Prostate gland (tissue), 2 donors: ENCODE measurements at regions of chr11 and their contacts with region 1.

Region 1: DNA sequence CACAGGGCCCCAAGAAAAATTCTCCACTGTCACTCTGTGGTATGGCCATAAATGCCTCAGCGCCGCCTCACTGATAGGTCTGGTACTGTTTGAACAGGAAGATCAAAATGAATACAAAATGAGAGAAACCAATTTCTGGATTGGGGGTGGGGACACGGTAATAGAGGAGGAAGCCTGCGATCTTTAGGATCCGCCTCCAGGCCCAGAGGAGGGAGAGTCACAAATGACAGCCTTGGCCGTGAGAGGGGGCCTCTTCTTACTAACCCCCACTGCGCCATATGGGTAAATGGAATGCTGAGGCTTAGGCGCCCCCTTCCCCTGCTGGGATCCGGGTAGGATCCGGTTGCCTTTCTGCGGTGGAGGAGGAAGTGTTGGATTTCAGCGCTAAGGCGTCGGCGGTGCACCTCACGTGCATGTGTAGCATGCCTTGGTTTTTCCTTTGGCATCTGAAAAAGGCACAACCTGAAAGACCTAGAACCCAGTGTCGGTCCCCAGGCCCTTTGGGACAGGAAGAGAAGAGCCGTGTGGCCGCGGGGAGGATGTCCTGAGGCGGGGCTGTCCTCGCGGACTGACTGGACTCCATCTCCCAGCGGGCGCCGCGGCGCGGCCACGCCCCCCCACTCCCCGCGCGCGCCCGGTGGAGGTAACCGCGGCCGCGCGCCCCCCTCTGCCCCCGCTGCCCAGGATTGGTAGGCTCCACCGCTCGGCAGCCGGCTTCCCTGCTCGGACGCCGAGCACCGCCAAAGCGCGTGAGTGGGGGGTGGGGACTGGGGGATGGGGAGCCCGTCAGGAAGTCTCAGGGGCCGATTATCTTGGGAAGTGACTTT is 718 bp upstream of the MADD start:
- DNase-seq: peak; percentile 90
- H3K4me3 ChIP-seq: peak overlapping the region; percentile 69 to 90
- H3K27ac ChIP-seq: peak overlapping the region; percentile 97
- H3K4me1 ChIP-seq: peaks cover 12% of the 10 kb centered on the region
- H3K27me3 ChIP-seq: no peaks in the 10 kb centered on the region
- CTCF ChIP-seq: peak in 2 of 4 experiments; percentile 50 to 56
- POLR2A ChIP-seq: no peak

Region 2: DNA sequence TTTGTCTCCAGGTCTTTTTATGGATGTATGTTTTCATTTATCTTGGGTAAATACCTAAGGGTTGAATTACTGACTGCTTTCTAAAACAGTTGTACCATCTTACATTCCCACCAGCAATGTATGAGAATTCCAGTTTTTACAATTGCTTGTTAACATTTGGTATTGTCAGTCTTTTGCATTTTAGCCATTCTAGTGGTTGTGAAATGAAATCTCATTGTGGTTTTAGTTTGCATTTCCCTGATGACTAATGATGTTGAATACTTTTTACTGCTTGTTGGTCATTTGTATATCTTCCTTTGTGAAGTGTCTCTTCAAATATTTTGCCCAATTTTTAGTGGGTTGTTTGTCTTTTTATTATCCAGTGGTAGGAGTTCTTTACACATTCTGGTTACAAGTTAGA is 185.3 kb before region 1 on chr11:
- intact Hi-C with region 1: no loop called
- DNase-seq: no peak
- H3K4me3 ChIP-seq: no peak overlapping the region
- H3K27ac ChIP-seq: no peak overlapping the region
- H3K4me1 ChIP-seq: no peaks in the 10 kb centered on the region
- H3K27me3 ChIP-seq: no peaks in the 10 kb centered on the region
- CTCF ChIP-seq: no peak
- POLR2A ChIP-seq: no peak

Region 3: GRCh38 chr11:47176328-47177228 is 92.6 kb before region 1 on chr11 and contains the start of gene ARFGAP2:
- intact Hi-C with region 1: loop called (anchors 2 kb)
- DNase-seq: peak; percentile 98
- H3K4me3 ChIP-seq: peak within 1 kb of the TSS; percentile 72 to 84
- H3K27ac ChIP-seq: peak within 1 kb of the TSS; percentile 97 to 100
- H3K4me1 ChIP-seq: peaks cover 16% of the 10 kb centered on the region
- H3K27me3 ChIP-seq: no peaks in the 10 kb centered on the region
- CTCF ChIP-seq: peak in 1 of 4 experiments; percentile 3
- POLR2A ChIP-seq: peak; percentile 32
- total RNA-seq, gene ARFGAP2: 111 to 146 TPM

Region 4: GRCh38 chr11:47220401-47220824 is 48.8 kb before region 1 on chr11:
- intact Hi-C with region 1: loop called (anchors 5 kb)
- DNase-seq: no peak
- H3K4me3 ChIP-seq: no peak overlapping the region
- H3K27ac ChIP-seq: no peak overlapping the region
- H3K4me1 ChIP-seq: peaks cover 15% of the 10 kb centered on the region
- H3K27me3 ChIP-seq: no peaks in the 10 kb centered on the region
- CTCF ChIP-seq: no peak
- POLR2A ChIP-seq: no peak

Region 5: GRCh38 chr11:47233989-47234668 is 35.1 kb before region 1 on chr11:
- intact Hi-C with region 1: no loop called
- DNase-seq: no peak
- H3K4me3 ChIP-seq: peak overlapping the region; percentile 13 to 29
- H3K27ac ChIP-seq: peak overlapping the region; percentile 39 to 58
- H3K4me1 ChIP-seq: no peaks in the 10 kb centered on the region
- H3K27me3 ChIP-seq: no peaks in the 10 kb centered on the region
- CTCF ChIP-seq: peak in 1 of 4 experiments; percentile 24
- POLR2A ChIP-seq: no peak

Region 6: DNA sequence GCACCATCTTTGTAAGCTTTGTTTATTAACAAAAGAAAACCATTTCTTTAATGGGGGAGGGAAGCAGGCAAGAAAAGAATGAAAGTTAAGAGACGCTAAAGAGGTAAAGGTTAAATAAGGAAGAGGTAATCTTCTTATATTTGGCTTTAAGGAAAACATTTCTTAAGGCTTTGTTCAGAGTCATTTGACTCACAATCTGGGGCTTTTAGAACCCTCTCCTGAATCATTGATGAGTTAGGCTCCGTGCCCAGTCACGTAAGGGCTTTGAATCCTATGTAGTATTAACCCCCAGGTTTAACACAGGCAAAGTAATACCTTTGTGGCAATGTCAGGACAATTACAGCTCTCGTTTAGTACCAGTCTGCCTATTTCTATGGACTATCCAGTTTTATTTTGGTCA is 26.8 kb after region 1 on chr11:
- intact Hi-C with region 1: no loop called
- DNase-seq: no peak
- H3K4me3 ChIP-seq: no peak overlapping the region
- H3K27ac ChIP-seq: no peak overlapping the region
- H3K4me1 ChIP-seq: no peaks in the 10 kb centered on the region
- H3K27me3 ChIP-seq: no peaks in the 10 kb centered on the region
- CTCF ChIP-seq: no peak
- POLR2A ChIP-seq: no peak

Region 7: GRCh38 chr11:47426061-47426956 is 157.1 kb after region 1 on chr11 and contains the start of gene PSMC3:
- intact Hi-C with region 1: loop called (anchors 10 kb)
- DNase-seq: peak; percentile 98
- H3K4me3 ChIP-seq: peak within 1 kb of the TSS; percentile 80 to 85
- H3K27ac ChIP-seq: peak within 1 kb of the TSS; percentile 84 to 91
- H3K4me1 ChIP-seq: peaks cover 9% of the 10 kb centered on the region
- H3K27me3 ChIP-seq: no peaks in the 10 kb centered on the region
- CTCF ChIP-seq: no peak
- POLR2A ChIP-seq: peak; percentile 49
- total RNA-seq, gene PSMC3: 99.2 to 133 TPM